HEK293T (cell line): ENCODE measurements at regions of chr19 and their contacts with region 1.

Region 1: GRCh38 chr19:39412100-39412866 is at the start of gene PLEKHG2:
- DNase-seq: peak; percentile 95

Region 2: DNA sequence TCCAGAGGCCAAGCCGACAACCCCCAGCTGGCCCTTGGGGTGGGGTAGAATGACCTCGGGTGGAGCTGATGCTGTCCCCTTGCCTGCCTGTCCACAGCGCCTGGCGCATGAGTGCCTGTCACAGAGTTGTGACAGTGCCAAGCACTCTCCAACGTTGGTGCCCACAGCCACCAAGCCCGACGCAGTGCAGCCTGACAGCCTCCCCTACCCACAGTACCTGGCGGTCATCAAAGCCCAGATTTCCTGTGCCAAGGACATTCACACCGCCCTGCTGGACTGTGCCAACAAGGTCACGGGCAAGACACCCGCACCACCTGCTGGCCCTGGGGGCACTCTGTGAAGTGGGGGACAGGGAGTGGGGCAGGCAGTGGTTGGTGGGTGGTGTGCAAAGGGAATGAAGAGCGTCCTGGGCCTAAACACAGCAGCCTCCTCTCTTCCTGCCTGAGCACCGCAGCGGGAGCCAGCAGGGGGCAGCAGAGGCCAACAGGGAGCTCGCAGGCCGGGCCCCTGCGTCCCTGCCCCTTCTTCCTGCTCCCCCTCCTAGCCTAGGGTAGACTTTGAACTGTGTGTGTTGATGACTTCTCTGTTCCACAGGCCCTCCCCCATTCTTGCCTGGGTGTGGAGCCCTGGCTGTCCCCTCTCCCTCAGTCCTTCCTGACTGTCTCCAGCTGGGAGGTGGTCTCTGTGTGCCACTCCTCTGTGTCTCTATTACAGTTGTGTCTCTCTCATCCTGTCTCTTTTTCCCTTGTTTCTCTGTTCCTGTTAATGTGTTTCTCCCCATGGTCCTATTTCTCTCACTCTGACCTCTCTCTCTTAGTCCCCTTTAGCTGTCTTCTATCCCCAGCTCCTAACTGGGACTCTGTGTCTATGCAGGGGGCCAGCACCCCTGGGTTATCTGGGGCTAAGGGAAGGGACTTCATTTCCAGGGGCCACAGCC is 14.7 kb before region 1 on chr19:
- CTCF ChIA-PET with region 1: interaction called, 25 read pairs
- POLR2A ChIA-PET with region 1: interaction called, 9 read pairs
- DNase-seq: peak; percentile 84

Region 3: GRCh38 chr19:39428283-39429112 is 16.2 kb after region 1 on chr19:
- CTCF ChIA-PET with region 1: interaction called, 10 read pairs
- POLR2A ChIA-PET with region 1: interaction called, 6 read pairs
- DNase-seq: no peak

Region 4: GRCh38 chr19:39532233-39533002 is 120.1 kb after region 1 on chr19 and contains the start of gene EID2B:
- CTCF ChIA-PET with region 1: no interaction called
- POLR2A ChIA-PET with region 1: no interaction called
- DNase-seq: peak; percentile 96